ENCODE measurements at regions of chr19 and their contacts with region 1.

Region 1: DNA sequence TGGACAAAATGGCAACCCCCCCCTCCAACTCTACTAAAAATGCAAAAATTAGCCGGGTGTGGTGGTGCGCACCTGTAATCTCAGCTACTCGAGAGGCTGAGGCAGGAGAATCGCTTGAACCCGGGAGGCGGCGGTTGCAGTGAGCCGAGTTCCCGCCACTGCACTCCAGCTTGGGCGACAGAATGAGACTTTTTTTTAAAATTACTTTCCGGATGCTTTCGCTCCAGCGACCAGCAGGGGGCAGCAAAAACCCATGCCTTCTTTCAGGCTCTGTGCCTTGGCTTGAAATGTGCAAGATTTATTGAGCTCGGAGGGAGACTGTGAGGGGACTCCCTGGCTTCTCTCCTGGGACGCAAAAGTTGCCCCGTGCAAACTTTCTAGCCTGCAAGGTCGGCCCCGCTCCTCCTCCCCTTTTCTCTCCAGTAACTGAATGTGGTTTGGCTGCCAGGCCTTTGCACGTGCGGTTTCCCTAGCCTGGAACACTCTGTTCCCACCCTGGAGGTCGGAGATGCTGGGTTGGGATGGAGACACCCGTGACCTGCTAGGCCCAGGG is 61.4 kb upstream of the NFIC start:
- DNase-seq: peak; percentile 78
- H3K4me3 ChIP-seq: peak overlapping the region in 1 of 4 donors; percentile 3
- H3K27ac ChIP-seq: no peak overlapping the region
- H3K4me1 ChIP-seq: peaks cover 0 to 10% (median 4%) of the 10 kb centered on the region in 4 donors
- H3K27me3 ChIP-seq: peaks cover 63% of the 10 kb centered on the region
- CTCF ChIP-seq: peak; percentile 84 to 95 (median 88)
- EP300 ChIP-seq: peak; percentile 54
- POLR2A ChIP-seq: no peak

Region 2: DNA sequence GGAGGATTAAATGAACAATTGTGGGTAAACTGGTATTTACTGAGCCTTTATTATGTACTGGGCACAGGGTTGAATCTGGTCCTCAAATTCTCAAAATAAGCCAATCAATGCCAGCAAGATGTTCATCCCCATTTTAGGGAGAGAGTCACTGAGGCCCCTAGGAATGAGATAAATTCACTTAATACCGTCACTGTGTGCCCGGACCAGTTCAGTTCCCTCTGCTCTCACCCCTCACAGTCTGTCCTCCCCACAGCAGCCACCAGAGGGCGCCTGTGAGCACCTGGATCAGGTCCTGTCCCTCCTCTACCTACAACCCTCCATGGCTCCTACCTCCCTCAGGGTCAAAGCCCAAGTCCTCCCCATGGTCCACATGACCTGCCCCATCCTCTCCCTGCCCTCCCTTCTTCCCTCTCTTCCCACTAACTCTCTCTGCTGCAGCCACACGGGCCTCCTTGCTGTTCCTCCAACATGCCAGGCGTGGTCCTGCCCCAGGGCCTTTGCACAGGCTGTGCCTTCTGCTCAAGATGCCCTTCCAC is 19.4 kb after region 1 on chr19:
- in situ Hi-C with region 1: no loop called
- intact Hi-C with region 1: no loop called
- DNase-seq: peak; percentile 78
- H3K4me3 ChIP-seq: no peak overlapping the region
- H3K27ac ChIP-seq: no peak overlapping the region
- H3K4me1 ChIP-seq: peaks cover 0 to 3% (median 0%) of the 10 kb centered on the region in 4 donors
- H3K27me3 ChIP-seq: peaks cover 17% of the 10 kb centered on the region
- CTCF ChIP-seq: peak; percentile 63 to 82 (median 73)
- EP300 ChIP-seq: no peak
- POLR2A ChIP-seq: no peak

Region 3: DNA sequence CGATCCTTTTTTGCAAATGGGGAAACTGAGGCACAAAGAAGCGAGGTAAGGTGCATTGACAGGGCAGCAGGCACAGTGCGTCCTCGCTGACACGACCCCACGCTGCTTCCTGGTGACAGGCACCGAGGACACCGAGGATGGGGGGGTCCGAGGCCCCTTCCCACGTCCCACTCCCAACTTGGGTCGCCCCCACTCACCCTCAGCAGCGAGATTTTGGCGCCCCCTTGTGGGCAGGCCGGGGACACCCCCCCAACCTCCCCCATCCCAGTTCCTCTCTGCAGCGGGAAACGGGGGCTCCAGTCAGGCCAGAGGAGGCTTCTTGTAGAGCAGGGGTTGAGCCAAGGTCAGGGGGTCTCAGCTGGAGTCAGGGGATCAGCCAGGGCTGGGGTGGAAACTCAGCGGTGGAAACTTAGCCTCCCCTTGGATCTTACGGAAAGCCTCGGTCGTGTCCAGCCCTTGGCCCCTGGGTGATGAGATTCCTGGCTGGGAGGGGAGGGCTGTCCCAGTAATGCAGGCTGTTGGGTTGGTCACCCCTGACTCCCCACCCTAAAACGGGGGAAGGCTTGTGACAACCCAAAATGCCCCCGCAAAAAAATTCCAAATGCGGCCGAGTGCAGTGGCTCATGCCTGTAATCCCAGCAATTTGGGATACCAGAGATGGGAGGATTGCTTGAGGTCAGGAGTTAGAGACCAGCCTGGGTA is 167.2 kb after region 1 on chr19:
- in situ Hi-C with region 1: no loop called
- intact Hi-C with region 1: loop called (anchors 5 kb)
- DNase-seq: peak; percentile 32
- H3K4me3 ChIP-seq: no peak overlapping the region
- H3K27ac ChIP-seq: no peak overlapping the region
- H3K4me1 ChIP-seq: peaks cover 7 to 23% (median 10%) of the 10 kb centered on the region in 4 donors
- H3K27me3 ChIP-seq: no peaks in the 10 kb centered on the region
- CTCF ChIP-seq: peak; percentile 78 to 86 (median 82)
- EP300 ChIP-seq: no peak
- POLR2A ChIP-seq: no peak

Region 4: DNA sequence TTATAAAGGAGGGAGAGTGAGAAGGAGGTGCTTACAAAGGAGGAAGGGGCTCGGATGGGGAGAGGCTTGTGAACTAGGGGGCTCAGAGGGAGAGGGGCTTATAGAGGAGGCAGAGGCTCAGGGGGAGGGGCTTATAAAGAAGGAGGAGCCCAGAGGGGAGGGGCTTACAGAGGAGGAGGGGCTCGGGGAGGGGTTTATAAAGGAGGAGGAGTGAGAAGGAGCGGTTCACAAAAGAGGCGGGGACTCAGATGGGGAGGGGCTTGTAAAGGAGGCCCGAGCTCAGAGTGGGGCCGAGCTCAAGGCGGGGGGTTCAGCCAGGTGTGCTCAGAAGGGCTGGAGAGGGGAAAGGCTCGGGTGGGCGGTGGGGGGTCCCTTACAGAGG is 174.9 kb after region 1 on chr19:
- in situ Hi-C with region 1: loop called in 1 of 4 experiments (anchors 10 kb)
- intact Hi-C with region 1: no loop called
- DNase-seq: no peak
- H3K4me3 ChIP-seq: peak overlapping the region in 3 of 4 donors; percentile 4 to 21 (median 19)
- H3K27ac ChIP-seq: peak overlapping the region in 3 of 4 donors; percentile 9 to 57 (median 39)
- H3K4me1 ChIP-seq: peaks cover 0 to 24% (median 15%) of the 10 kb centered on the region in 4 donors
- H3K27me3 ChIP-seq: peaks cover 20% of the 10 kb centered on the region
- CTCF ChIP-seq: no peak
- EP300 ChIP-seq: no peak
- POLR2A ChIP-seq: no peak

Region 5: GRCh38 chr19:3618144-3618810 is 313.3 kb after region 1 on chr19:
- in situ Hi-C with region 1: no loop called
- intact Hi-C with region 1: loop called (anchors 10 kb)
- DNase-seq: peak; percentile 70
- H3K4me3 ChIP-seq: no peak overlapping the region
- H3K27ac ChIP-seq: peak overlapping the region in 2 of 4 donors; percentile 4 to 21
- H3K4me1 ChIP-seq: peaks cover 0 to 15% (median 7%) of the 10 kb centered on the region in 4 donors
- H3K27me3 ChIP-seq: no peaks in the 10 kb centered on the region
- CTCF ChIP-seq: peak; percentile 86 to 95 (median 92)
- EP300 ChIP-seq: no peak
- POLR2A ChIP-seq: no peak

Measured in transverse colon (tissue), 4 donors.